ENCODE measurements at regions of chr7 and their contacts with region 1.

Region 1: DNA sequence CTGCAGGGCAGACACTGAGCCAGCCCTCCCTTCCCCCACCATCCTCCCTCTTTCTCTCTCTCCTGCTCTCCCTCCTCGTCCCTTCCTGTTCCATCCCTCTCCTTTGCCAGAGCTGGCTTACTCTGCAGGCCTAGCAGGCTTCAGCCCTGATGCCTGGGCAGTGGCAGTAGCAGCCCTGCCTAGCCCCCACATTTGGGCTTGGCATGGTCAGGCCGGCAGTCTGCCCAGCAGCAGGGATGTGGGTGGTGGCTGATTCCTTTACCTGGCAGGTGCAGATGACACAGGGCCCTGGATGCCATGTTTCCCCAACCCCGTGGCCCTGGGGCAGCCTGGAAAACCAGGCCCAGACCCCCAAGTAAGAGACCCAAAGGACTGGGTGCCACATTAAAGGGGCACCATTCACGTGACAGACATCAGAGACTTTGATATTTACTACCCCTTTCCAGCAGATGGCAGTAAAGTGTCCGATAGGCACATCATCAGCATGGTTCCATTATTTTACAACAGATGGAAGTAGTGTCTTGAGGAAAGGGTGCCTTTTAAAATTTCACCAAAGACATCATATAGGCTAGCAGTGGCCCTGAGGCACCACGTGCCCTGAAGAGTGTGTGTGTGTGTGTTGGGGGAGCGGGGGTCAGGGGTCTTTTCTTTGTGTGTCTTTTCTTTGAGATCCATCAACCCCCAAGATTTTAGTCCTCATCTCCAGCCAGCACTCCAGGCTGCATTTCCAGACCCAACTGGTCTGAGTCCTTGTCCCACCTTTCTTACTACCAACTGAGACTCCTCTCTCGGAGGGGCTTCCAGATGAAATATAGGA is 5.9 kb downstream of the KCP start:
- DNase-seq: no peak
- H3K4me3 ChIP-seq: no peak overlapping the region
- H3K27ac ChIP-seq: no peak overlapping the region
- H3K4me1 ChIP-seq: no peaks in the 10 kb centered on the region
- H3K27me3 ChIP-seq: peaks cover 4% of the 10 kb centered on the region
- CTCF ChIP-seq: peak; percentile 51 to 77 (median 66)
- POLR2A ChIP-seq: no peak

Region 2: GRCh38 chr7:128687131-128687530 is 217.5 kb before region 1 on chr7:
- intact Hi-C with region 1: no loop called
- DNase-seq: no peak
- H3K4me3 ChIP-seq: no peak overlapping the region
- H3K27ac ChIP-seq: no peak overlapping the region
- H3K4me1 ChIP-seq: no peaks in the 10 kb centered on the region
- H3K27me3 ChIP-seq: no peaks in the 10 kb centered on the region
- CTCF ChIP-seq: no peak
- POLR2A ChIP-seq: no peak

Region 3: GRCh38 chr7:128697302-128697905 is 207.2 kb before region 1 on chr7:
- intact Hi-C with region 1: no loop called
- DNase-seq: peak in 5 of 7 donors; percentile 28 to 57 (median 36)
- H3K4me3 ChIP-seq: peak overlapping the region in 1 of 4 donors; percentile 36
- H3K27ac ChIP-seq: no peak overlapping the region
- H3K4me1 ChIP-seq: peaks cover 0 to 4% of the 10 kb centered on the region in 2 donors
- H3K27me3 ChIP-seq: peaks cover 19% of the 10 kb centered on the region
- CTCF ChIP-seq: no peak
- POLR2A ChIP-seq: no peak

Region 4: GRCh38 chr7:128849804-128850490 is 54.6 kb before region 1 on chr7:
- intact Hi-C with region 1: no loop called
- DNase-seq: no peak
- H3K4me3 ChIP-seq: no peak overlapping the region
- H3K27ac ChIP-seq: no peak overlapping the region
- H3K4me1 ChIP-seq: no peaks in the 10 kb centered on the region
- H3K27me3 ChIP-seq: no peaks in the 10 kb centered on the region
- CTCF ChIP-seq: no peak
- POLR2A ChIP-seq: no peak

Region 5: DNA sequence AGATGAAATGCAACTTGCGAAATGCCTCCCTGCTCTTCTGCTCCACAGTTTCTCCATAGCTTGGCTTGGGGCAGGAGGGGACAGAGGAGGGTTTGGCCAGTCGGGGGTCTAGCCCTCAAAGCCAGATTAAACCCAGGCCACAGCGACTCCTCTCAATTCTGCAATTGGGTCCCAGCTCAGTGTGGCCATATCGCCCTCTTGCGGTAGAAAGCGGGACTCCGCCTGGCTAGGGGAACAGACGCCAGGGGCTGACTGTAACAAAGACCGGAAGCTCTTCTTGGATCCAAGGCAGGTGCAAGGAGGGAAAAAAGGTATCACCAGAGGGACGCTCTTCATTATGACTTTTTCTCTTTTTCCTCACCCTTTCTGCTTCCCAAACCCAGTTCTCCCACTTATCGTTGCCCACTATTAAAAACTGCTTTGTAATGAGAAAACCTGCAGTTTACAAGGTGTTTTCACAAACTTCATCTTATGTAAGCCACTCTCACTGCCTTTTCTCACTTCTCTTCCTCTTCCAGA is 187.0 kb after region 1 on chr7:
- intact Hi-C with region 1: loop called (anchors 2 to 5 kb)
- DNase-seq: peak; percentile 70 to 94 (median 83)
- H3K4me3 ChIP-seq: no peak overlapping the region
- H3K27ac ChIP-seq: no peak overlapping the region
- H3K4me1 ChIP-seq: peaks cover 0 to 4% of the 10 kb centered on the region in 2 donors
- H3K27me3 ChIP-seq: no peaks in the 10 kb centered on the region
- CTCF ChIP-seq: peak; percentile 92 to 98 (median 96)
- POLR2A ChIP-seq: no peak

Region 6: DNA sequence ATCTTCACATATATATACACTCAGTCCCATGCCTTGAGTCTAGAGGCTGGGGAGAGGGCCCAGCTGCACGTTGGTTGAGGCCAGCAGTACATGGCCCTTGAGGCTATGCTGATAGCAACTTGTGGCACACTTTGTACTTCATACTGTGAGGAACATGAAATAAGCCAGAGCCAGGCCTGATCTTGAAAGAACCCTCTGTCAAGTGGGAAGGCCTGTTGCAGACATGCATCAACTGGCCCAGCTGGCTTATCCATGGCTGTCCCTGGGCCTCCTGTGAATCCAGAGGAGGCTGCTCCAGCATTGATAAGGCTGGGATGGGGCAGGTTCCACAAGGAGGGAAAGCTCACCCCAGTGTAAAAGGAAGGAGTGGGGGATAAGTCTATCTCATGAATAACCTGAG is 847.3 kb after region 1 on chr7:
- intact Hi-C with region 1: no loop called
- DNase-seq: no peak
- H3K4me3 ChIP-seq: no peak overlapping the region
- H3K27ac ChIP-seq: no peak overlapping the region
- H3K4me1 ChIP-seq: no peaks in the 10 kb centered on the region
- H3K27me3 ChIP-seq: no peaks in the 10 kb centered on the region
- CTCF ChIP-seq: no peak
- POLR2A ChIP-seq: no peak

Measured in adrenal gland (tissue), 19 donors.